Endothelial cell of umbilical vein (primary cell): ENCODE measurements at regions of chr17 and their contacts with region 1.

Region 1: DNA sequence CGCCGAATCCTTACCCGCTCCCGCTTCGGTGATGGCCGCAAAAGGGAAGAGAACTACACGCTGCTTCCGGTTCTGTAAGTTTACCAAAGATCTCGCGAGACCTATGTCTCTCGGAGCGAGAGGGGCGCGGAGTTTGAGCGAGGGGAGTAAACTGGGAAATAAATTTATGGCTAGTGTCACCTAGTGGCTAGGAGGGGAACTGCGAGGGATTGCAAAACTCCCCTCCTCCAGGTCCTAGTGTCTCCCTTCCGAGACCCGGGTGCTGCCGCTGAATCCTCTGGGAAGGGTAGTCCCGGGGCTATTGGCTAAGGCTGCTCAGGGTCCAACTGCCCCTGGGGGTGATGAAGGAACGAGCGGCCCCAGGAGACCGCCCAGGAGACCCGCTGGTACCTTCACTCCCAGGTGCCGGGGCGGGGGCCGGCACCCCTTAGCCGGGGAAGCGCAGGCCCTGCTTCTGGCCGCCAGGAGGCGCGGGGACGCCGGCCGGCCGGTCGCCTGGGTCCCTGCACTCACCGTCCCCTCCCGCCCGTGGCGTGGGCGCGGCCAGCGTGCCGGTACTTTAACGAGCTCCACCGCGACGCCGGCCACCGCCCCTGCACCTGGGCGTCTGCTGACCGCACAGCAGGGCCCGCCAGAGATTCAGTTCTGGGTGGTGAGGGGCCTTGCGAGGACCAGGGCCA is at the start of gene RPL26:
- DNase-seq: peak; percentile 98
- H3K4me3 ChIP-seq: peak within 1 kb of the TSS; percentile 76 to 100 (median 99)
- H3K27ac ChIP-seq: peak within 1 kb of the TSS; percentile 78
- H3K4me1 ChIP-seq: peaks cover 39% of the 10 kb centered on the region
- H3K27me3 ChIP-seq: no peaks in the 10 kb centered on the region
- CTCF ChIP-seq: peak; percentile 69 to 95
- POLR2A ChIP-seq: peak; percentile 97
- total RNA-seq, gene RPL26: 1,739 and 1,805 TPM in 2 replicates

Region 2: GRCh38 chr17:8311131-8311790 is 72.0 kb before region 1 on chr17:
- CTCF ChIA-PET with region 1: no interaction called
- POLR2A ChIA-PET with region 1: no interaction called
- dilution Hi-C with region 1: no loop called
- intact Hi-C with region 1: loop called (anchors 1 kb)
- DNase-seq: peak; percentile 46
- H3K4me3 ChIP-seq: peak overlapping the region; percentile 29 to 67 (median 60)
- H3K27ac ChIP-seq: peak overlapping the region; percentile 48
- H3K4me1 ChIP-seq: peaks cover 31% of the 10 kb centered on the region
- H3K27me3 ChIP-seq: no peaks in the 10 kb centered on the region
- CTCF ChIP-seq: no peak
- POLR2A ChIP-seq: no peak

Region 3: DNA sequence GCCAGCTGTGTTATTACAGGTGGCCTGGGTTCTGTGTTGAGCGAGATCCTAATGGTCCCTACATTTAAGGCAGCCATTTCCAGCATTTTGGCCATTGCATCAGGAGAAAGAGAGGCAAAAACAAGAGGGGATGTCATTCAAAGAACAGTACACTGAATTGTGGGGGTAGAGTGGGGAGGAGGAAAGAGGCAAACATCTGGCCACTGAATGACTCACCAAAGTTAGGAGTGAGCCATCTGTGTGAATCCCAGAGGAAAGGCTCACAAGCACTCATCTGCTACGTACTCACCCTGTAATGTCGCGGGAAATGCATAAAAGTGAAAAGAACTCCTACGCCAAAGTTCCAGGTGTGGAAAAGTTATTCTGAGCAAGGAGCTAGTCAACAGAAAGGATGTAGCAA is 23.5 kb before region 1 on chr17:
- CTCF ChIA-PET with region 1: interaction called, 22 read pairs
- POLR2A ChIA-PET with region 1: no interaction called
- dilution Hi-C with region 1: no loop called
- intact Hi-C with region 1: no loop called
- DNase-seq: peak; percentile 95
- H3K4me3 ChIP-seq: peak overlapping the region in 1 of 3 experiments; percentile 50
- H3K27ac ChIP-seq: peak overlapping the region; percentile 90
- H3K4me1 ChIP-seq: peaks cover 32% of the 10 kb centered on the region
- H3K27me3 ChIP-seq: no peaks in the 10 kb centered on the region
- CTCF ChIP-seq: no peak
- POLR2A ChIP-seq: no peak

Region 4: GRCh38 chr17:8435245-8436168 is 52.2 kb after region 1 on chr17 and contains the start of gene NDEL1:
- CTCF ChIA-PET with region 1: interaction called, 11 read pairs
- POLR2A ChIA-PET with region 1: no interaction called
- dilution Hi-C with region 1: no loop called
- intact Hi-C with region 1: loop called (anchors 2 kb)
- DNase-seq: peak; percentile 98
- H3K4me3 ChIP-seq: peak within 1 kb of the TSS; percentile 77 to 97 (median 93)
- H3K27ac ChIP-seq: peak within 1 kb of the TSS; percentile 86
- H3K4me1 ChIP-seq: peaks cover 12% of the 10 kb centered on the region
- H3K27me3 ChIP-seq: no peaks in the 10 kb centered on the region
- CTCF ChIP-seq: no peak
- POLR2A ChIP-seq: peak; percentile 95
- total RNA-seq, gene NDEL1: 60.0 and 65.7 TPM in 2 replicates